ENCODE measurements at regions of chr17 and their contacts with region 1.

Region 1: DNA sequence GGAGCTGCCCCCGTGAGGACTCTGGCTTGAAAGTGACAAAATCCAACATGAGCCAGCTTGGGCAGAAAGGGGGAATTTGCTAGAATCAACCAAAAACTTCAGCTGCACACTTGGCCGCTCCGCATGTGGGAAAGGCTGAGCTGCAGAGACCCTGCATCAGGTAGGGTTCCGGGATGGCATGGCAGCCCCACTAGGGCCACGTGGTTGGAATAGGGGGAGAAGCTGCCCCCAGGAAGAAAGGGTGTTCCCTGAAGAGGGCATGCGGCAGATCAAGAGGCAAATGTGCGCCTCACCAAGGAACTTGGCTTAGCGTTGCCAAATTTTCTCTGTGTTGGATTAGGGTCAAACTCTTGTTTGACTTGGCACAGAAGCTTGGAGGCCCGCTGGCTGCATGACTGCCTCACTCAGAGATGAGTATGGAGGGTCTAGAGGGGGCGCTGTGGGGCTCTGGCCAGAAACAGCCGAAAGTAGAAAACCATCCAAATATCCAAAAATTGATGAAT is 29.2 kb upstream of the WFIKKN2 start:
- DNase-seq: peak in 1 of 2 experiments; percentile 68
- H3K4me3 ChIP-seq: no peak overlapping the region
- H3K27ac ChIP-seq: no peak overlapping the region
- H3K4me1 ChIP-seq: no peaks in the 10 kb centered on the region
- H3K27me3 ChIP-seq: no peaks in the 10 kb centered on the region
- CTCF ChIP-seq: peak; percentile 54 to 61 (median 58)
- EP300 ChIP-seq: no peak
- POLR2A ChIP-seq: no peak
- RAD21 ChIP-seq: peak; percentile 37 to 53; a peak in 3 of 4 replicates

Region 2: GRCh38 chr17:50828508-50829170 is 22.4 kb after region 1 on chr17:
- CTCF ChIA-PET with region 1: interaction called, 125 read pairs
- POLR2A ChIA-PET with region 1: no interaction called
- DNase-seq: no peak
- H3K4me3 ChIP-seq: no peak overlapping the region
- H3K27ac ChIP-seq: no peak overlapping the region
- H3K4me1 ChIP-seq: peaks cover 7 to 17% (median 11%) of the 10 kb centered on the region in 4 experiments
- H3K27me3 ChIP-seq: no peaks in the 10 kb centered on the region
- CTCF ChIP-seq: no peak
- EP300 ChIP-seq: no peak
- POLR2A ChIP-seq: no peak
- RAD21 ChIP-seq: no peak